Mammary epithelial cell (primary cell): ENCODE measurements at regions of chr4 and their contacts with region 1.

Region 1: GRCh38 chr4:83012687-83013419 is 2.2 kb upstream of the LIN54 start:
- DNase-seq: peak; percentile 98
- H3K4me3 ChIP-seq: peak overlapping the region; percentile 78 to 100 (median 85)
- H3K27ac ChIP-seq: peak overlapping the region; percentile 84
- H3K4me1 ChIP-seq: peaks cover 16% of the 10 kb centered on the region
- H3K27me3 ChIP-seq: no peaks in the 10 kb centered on the region
- CTCF ChIP-seq: peak; percentile 11 to 55

Region 2: GRCh38 chr4:82373816-82374625 is 638.8 kb before region 1 on chr4 and contains the start of gene HNRNPD:
- CTCF ChIA-PET with region 1: no interaction called
- dilution Hi-C with region 1: no loop called
- in situ Hi-C with region 1: no loop called
- intact Hi-C with region 1: loop called (anchors 5 kb)
- DNase-seq: peak; percentile 100
- H3K4me3 ChIP-seq: peak within 1 kb of the TSS; percentile 94 to 100 (median 98)
- H3K27ac ChIP-seq: peak within 1 kb of the TSS; percentile 99
- H3K4me1 ChIP-seq: peaks cover 17% of the 10 kb centered on the region
- H3K27me3 ChIP-seq: no peaks in the 10 kb centered on the region
- CTCF ChIP-seq: peak in 1 of 2 donors; percentile 3
- total RNA-seq, gene HNRNPD: 13.5 to 251 TPM

Region 3: GRCh38 chr4:82787342-82787741 is 225.5 kb before region 1 on chr4:
- CTCF ChIA-PET with region 1: no interaction called
- dilution Hi-C with region 1: no loop called
- in situ Hi-C with region 1: no loop called
- intact Hi-C with region 1: no loop called
- DNase-seq: peak; percentile 91
- H3K4me3 ChIP-seq: no peak overlapping the region
- H3K27ac ChIP-seq: peak overlapping the region; percentile 42
- H3K4me1 ChIP-seq: peaks cover 39% of the 10 kb centered on the region
- H3K27me3 ChIP-seq: no peaks in the 10 kb centered on the region
- CTCF ChIP-seq: no peak

Region 4: GRCh38 chr4:82890901-82891706 is 121.7 kb before region 1 on chr4 and contains the start of gene SEC31A:
- CTCF ChIA-PET with region 1: no interaction called
- dilution Hi-C with region 1: no loop called
- in situ Hi-C with region 1: loop called in 1 of 2 experiments (anchors 5 kb)
- intact Hi-C with region 1: loop called (anchors 1 kb)
- DNase-seq: peak; percentile 95
- H3K4me3 ChIP-seq: peak within 1 kb of the TSS; percentile 65 to 97 (median 92)
- H3K27ac ChIP-seq: peak within 1 kb of the TSS; percentile 98
- H3K4me1 ChIP-seq: peaks cover 31% of the 10 kb centered on the region
- H3K27me3 ChIP-seq: no peaks in the 10 kb centered on the region
- CTCF ChIP-seq: peak in 1 of 2 donors; percentile 7
- total RNA-seq, gene SEC31A: 204 to 225 TPM

Region 5: GRCh38 chr4:82900331-82901128 is 112.3 kb before region 1 on chr4 and contains the start of gene THAP9:
- CTCF ChIA-PET with region 1: no interaction called
- dilution Hi-C with region 1: no loop called
- in situ Hi-C with region 1: no loop called
- intact Hi-C with region 1: loop called (anchors 1 kb)
- DNase-seq: peak; percentile 100
- H3K4me3 ChIP-seq: peak within 1 kb of the TSS; percentile 69 to 90 (median 70)
- H3K27ac ChIP-seq: peak within 1 kb of the TSS; percentile 96
- H3K4me1 ChIP-seq: peaks cover 2% of the 10 kb centered on the region
- H3K27me3 ChIP-seq: no peaks in the 10 kb centered on the region
- CTCF ChIP-seq: no peak
- total RNA-seq, gene THAP9: 2.8 to 3.0 TPM

Region 6: GRCh38 chr4:83034630-83035494 is 22.0 kb after region 1 on chr4 and contains the start of gene COPS4:
- CTCF ChIA-PET with region 1: interaction called, 12 read pairs
- dilution Hi-C with region 1: no loop called
- in situ Hi-C with region 1: no loop called
- intact Hi-C with region 1: loop called (anchors 1 kb)
- DNase-seq: peak; percentile 100
- H3K4me3 ChIP-seq: peak within 1 kb of the TSS; percentile 71 to 83 (median 77)
- H3K27ac ChIP-seq: peak within 1 kb of the TSS; percentile 83
- H3K4me1 ChIP-seq: peaks cover 10% of the 10 kb centered on the region
- H3K27me3 ChIP-seq: no peaks in the 10 kb centered on the region
- CTCF ChIP-seq: peak; percentile 8 to 53
- total RNA-seq, gene COPS4: 34.1 to 69.5 TPM